CD4-positive, alpha-beta memory T cell (primary cell): ENCODE measurements at regions of chrX and their contacts with region 1.

Region 1: DNA sequence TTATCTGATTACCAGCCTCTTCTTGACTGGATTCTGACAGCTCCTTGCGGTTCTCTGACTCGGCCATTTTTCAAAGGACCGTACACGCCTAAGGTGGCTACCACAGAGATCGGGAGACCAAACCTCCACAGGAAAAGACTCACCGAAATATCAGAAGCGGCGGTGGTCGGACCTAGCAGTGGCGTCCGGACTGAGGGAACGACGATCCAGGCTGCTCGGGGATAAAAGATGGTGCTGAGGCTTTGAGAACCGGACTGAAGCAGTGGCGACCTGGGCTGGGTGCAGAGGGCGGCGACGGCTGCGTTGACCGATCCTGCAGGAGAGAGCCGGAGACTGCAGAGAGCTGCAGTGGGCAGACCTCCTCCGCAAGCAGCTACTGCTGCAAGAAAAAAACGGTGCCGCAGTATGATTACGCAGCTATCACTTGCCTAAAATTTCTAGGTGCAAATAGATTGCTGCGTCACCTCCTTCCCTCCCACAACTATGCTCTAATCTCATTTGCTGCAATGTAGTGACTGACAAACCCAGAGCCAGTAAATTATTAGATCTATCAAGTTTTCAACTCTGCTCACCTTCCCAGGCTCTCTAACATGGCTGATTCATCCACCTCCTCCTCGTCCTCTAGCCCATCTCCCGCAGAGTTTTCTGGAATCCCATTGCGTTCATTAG is at the start of gene NAP1L2:
- DNase-seq: peak; percentile 47 to 70 (median 55)
- H3K4me3 ChIP-seq: peak within 1 kb of the TSS; percentile 66 to 69
- H3K4me3 Mint-ChIP-seq: peak within 1 kb of the TSS; percentile 89 to 97 (median 92)
- H3K27ac ChIP-seq: peak within 1 kb of the TSS; percentile 54
- H3K27ac Mint-ChIP-seq: peak within 1 kb of the TSS; percentile 89 to 94 (median 92)
- H3K4me1 ChIP-seq: peaks cover 21% of the 10 kb centered on the region
- H3K4me1 Mint-ChIP-seq: peaks cover 8 to 34% (median 13%) of the 10 kb centered on the region in 4 donors
- H3K27me3 ChIP-seq: no peaks in the 10 kb centered on the region
- H3K27me3 Mint-ChIP-seq: peaks cover 1 to 3% of the 10 kb centered on the region in 2 donors
- total RNA-seq, gene NAP1L2: 19.1 to 20.9 TPM

Region 2: GRCh38 chrX:72572248-72573157 is 642.1 kb before region 1 on chrX and contains the start of gene HDAC8:
- CTCF ChIA-PET with region 1: no interaction called
- POLR2A ChIA-PET with region 1: no interaction called
- intact Hi-C with region 1: loop called (anchors 5 kb)
- DNase-seq: peak; percentile 42 to 57 (median 47)
- H3K4me3 ChIP-seq: peak within 1 kb of the TSS; percentile 64 to 66
- H3K4me3 Mint-ChIP-seq: peak within 1 kb of the TSS; percentile 93 to 98 (median 96)
- H3K27ac ChIP-seq: peak within 1 kb of the TSS; percentile 46
- H3K27ac Mint-ChIP-seq: peak within 1 kb of the TSS; percentile 65 to 96 (median 89)
- H3K4me1 ChIP-seq: peaks cover 5% of the 10 kb centered on the region
- H3K4me1 Mint-ChIP-seq: peaks cover 5 to 14% (median 7%) of the 10 kb centered on the region in 4 donors
- H3K27me3 ChIP-seq: no peaks in the 10 kb centered on the region
- H3K27me3 Mint-ChIP-seq: no peaks in the 10 kb centered on the region
- total RNA-seq, gene HDAC8: 15.2 to 23.0 TPM

Region 3: GRCh38 chrX:73562984-73563737 is 348.6 kb after region 1 on chrX and contains the start of gene CHIC1:
- CTCF ChIA-PET with region 1: no interaction called
- POLR2A ChIA-PET with region 1: interaction called, 3 read pairs
- intact Hi-C with region 1: loop called (anchors 5 kb)
- DNase-seq: peak; percentile 74 to 85 (median 77)
- H3K4me3 ChIP-seq: peak within 1 kb of the TSS; percentile 73 to 81
- H3K4me3 Mint-ChIP-seq: peak within 1 kb of the TSS; percentile 88 to 98 (median 94)
- H3K27ac ChIP-seq: peak within 1 kb of the TSS; percentile 78
- H3K27ac Mint-ChIP-seq: peak within 1 kb of the TSS; percentile 94 to 99 (median 99)
- H3K4me1 ChIP-seq: peaks cover 32% of the 10 kb centered on the region
- H3K4me1 Mint-ChIP-seq: peaks cover 4 to 48% (median 11%) of the 10 kb centered on the region in 4 donors
- H3K27me3 ChIP-seq: no peaks in the 10 kb centered on the region
- H3K27me3 Mint-ChIP-seq: no peaks in the 10 kb centered on the region
- total RNA-seq, gene CHIC1: 17.2 to 18.1 TPM